A549 (cell line): ENCODE measurements at regions of chr12 and their contacts with region 1.

Region 1: DNA sequence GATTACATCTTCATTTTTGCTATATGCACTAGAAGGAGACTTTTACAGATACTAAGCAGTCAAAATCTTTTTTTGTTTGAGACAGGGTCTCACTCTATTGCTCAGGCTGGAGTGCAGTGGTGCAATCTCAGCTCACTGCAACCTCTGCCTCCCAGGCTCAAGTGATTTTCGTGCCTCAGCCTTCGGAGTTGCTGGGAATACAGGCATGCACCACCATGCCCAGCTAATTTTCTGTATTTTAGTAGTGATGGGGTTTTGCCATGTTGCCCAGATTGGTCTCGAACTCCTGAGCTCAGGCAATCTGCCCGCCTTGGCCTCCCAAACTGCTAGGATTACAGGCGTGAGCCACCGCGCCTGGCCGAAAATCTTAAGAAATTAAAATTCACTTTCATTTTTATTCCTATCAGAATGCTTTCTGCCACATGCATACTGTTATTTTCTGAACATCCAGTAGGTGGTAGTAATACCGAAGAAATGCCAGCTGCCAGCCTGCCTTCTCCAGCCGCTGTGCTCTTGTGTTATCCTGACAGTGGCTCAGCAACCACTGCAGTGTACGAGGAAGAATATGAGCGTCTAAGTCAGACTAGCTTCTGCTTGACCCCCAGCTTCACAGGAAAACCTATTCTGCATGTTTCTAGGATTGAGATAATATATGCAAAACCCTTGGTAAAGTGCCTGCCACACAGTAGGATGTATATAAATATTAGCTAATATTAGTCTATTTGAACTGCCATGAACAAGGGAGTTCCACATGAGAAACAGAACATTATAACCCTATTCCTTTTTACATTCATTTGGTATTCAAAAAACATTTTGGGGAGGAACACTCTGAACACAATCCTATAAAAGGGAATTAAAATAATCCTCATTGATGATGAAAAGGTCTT is 54.2 kb downstream of the RPAP3 start:
- DNase-seq: peak; percentile 32 to 75
- ATAC-seq: peak; percentile 95
- H3K4me3 ChIP-seq: 0 out of 3 replicates have a peak overlapping the region, but pooled peaks have one; percentile 14
- H3K27ac ChIP-seq: peak overlapping the region; percentile 61 to 82
- H3K4me1 ChIP-seq: peaks cover 28% of the 10 kb centered on the region
- CTCF ChIP-seq: peak; percentile 74
- EP300 ChIP-seq: no peak
- POLR2A ChIP-seq: no peak
- RAD21 ChIP-seq: peak; percentile 76 to 79

Region 2: DNA sequence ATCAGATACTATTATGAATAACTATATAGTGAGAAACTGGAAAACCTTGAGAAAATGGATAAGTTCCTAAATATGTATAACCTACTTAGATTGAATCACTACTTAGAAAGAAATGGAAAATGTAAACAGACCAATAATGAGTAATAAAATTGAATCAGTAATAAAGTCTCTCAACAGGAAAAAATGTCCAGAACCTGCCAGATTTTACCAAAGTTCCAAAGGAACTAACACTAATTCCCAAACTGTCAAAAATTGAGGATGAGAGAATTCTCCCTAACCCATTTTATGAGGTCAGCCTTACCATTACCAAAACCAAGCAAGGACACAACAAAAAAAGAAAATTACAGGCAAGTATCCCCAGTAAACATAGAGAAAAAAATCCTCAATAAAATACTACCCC is 217.7 kb before region 1 on chr12:
- CTCF ChIA-PET with region 1: no interaction called
- POLR2A ChIA-PET with region 1: no interaction called
- DNase-seq: no peak
- ATAC-seq: no peak
- H3K4me3 ChIP-seq: no peak overlapping the region
- H3K27ac ChIP-seq: no peak overlapping the region
- H3K4me1 ChIP-seq: no peaks in the 10 kb centered on the region
- CTCF ChIP-seq: no peak
- EP300 ChIP-seq: no peak
- POLR2A ChIP-seq: no peak
- RAD21 ChIP-seq: no peak

Region 3: GRCh38 chr12:47672068-47672467 is 20.5 kb after region 1 on chr12:
- CTCF ChIA-PET with region 1: interaction called, 17 read pairs
- POLR2A ChIA-PET with region 1: no interaction called
- DNase-seq: no peak
- ATAC-seq: no peak
- H3K4me3 ChIP-seq: no peak overlapping the region
- H3K27ac ChIP-seq: no peak overlapping the region
- H3K4me1 ChIP-seq: no peaks in the 10 kb centered on the region
- CTCF ChIP-seq: no peak
- EP300 ChIP-seq: no peak
- POLR2A ChIP-seq: no peak
- RAD21 ChIP-seq: no peak

Region 4: GRCh38 chr12:47686645-47687240 is 35.1 kb after region 1 on chr12:
- CTCF ChIA-PET with region 1: interaction called, 14 read pairs
- POLR2A ChIA-PET with region 1: no interaction called
- DNase-seq: peak; percentile 53 to 66
- ATAC-seq: peak; percentile 70 to 83
- H3K4me3 ChIP-seq: no peak overlapping the region
- H3K27ac ChIP-seq: peak overlapping the region; percentile 14 to 45; a peak in 3 of 6 replicates
- H3K4me1 ChIP-seq: peaks cover 3% of the 10 kb centered on the region; the same call in 1 of the 3 replicates
- CTCF ChIP-seq: peak; percentile 93
- EP300 ChIP-seq: no peak
- POLR2A ChIP-seq: no peak
- RAD21 ChIP-seq: peak; percentile 89 to 91

Region 5: DNA sequence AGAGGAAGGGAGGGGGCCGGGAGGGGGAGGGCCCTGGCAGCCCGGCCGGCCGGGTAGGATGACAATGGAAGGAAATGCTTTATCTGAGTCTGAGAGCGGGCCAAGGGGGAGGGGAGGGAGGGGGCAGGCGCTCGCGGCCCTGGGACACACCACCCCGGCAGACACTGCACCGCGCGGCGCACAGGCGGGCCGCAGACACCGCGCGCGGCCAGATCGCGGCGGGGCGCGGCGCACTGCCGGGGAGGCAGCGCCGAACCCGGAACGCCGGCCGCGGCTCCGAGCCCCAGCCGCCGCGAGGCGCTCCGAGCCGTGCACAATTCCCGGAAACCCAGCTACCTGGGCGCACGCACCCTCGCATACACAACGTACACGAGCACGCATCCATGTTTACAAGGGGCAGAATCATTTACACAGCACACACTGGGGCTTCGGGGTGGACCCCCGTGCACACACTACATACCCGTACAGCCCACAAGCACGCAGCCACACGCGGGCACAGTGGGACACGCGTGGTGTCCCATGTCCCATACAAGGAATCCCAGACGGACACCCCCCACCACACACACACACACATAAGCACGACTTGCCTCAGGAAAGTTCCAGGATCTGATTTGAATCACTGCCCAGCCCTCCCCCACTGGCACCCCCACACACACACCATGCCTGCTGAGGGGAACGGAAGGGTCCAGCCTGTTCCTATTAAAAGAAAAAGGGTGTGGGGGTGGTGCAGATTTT is 168.5 kb after region 1 on chr12 and contains the start of gene HDAC7:
- CTCF ChIA-PET with region 1: no interaction called
- POLR2A ChIA-PET with region 1: no interaction called
- DNase-seq: peak; percentile 86 to 90
- ATAC-seq: peak; percentile 52 to 74
- H3K4me3 ChIP-seq: peak within 1 kb of the TSS; percentile 89
- H3K27ac ChIP-seq: peak within 1 kb of the TSS; percentile 96 to 100
- H3K4me1 ChIP-seq: peaks cover 68% of the 10 kb centered on the region
- CTCF ChIP-seq: no peak
- EP300 ChIP-seq: 0 out of 5 replicates have a peak, but pooled peaks have one; percentile 23 to 29
- POLR2A ChIP-seq: peak; percentile 82
- RAD21 ChIP-seq: no peak
- polyA plus RNA-seq, gene HDAC7: 17.2 and 20.8 TPM in 2 replicates